HepG2 (cell line): ENCODE measurements at regions of chr14 and their contacts with region 1.

Region 1: DNA sequence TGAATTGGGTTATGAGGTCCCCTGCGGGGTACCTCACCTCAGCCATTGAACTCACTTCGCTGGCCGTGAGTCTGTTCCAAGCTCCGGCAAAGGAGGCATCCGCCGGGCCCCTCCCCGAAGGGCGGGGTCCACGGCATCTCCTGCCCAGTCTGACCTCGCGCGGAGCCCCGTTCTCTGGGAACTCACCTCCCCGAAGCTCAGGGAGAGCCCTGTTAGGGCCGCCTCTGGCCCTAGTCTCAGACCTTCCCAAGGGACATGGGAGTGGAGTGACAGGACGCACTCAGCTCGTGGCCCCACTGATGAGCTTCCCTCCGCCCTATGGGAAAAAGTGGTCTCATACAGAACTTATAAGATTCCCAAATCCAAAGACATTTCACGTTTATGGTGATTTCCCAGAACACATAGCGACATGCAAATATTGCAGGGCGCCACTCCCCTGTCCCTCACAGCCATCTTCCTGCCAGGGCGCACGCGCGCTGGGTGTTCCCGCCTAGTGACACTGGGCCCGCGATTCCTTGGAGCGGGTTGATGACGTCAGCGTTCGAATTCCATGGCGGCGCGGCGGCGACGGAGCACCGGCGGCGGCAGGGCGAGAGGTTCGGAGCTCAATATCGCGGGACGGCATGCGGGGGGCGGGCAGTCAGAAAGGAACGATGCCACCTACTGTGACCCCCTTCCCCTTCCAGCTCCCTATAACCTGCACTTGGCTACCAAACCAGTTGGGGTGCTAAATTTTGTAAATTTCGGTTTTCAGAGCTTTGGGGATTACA is at the start of gene PARP2:
- DNase-seq: peak; percentile 100
- ATAC-seq: peak; percentile 99
- H3K4me3 ChIP-seq: peak within 1 kb of the TSS; percentile 82 to 88 (median 86)
- H3K27ac ChIP-seq: peak within 1 kb of the TSS; percentile 89
- H3K4me1 ChIP-seq: peaks cover 24% of the 10 kb centered on the region
- H3K27me3 ChIP-seq: no peaks in the 10 kb centered on the region; a peak in 1 of 5 replicates
- CTCF ChIP-seq: peak; percentile 25; the same call in 1 of the 2 replicates
- EP300 ChIP-seq: no peak; a peak in 1 of 4 replicates
- POLR2A ChIP-seq: peak; percentile 82 to 99
- RAD21 ChIP-seq: peak; percentile 42; the same call in 1 of the 2 replicates
- total RNA-seq, gene PARP2: 37.3 and 39.1 TPM in 2 replicates

Region 2: GRCh38 chr14:20332788-20333493 is 10.3 kb before region 1 on chr14 and contains the start of gene CCNB1IP1:
- CTCF ChIA-PET with region 1: no interaction called
- POLR2A ChIA-PET with region 1: interaction called, 139 read pairs
- in situ Hi-C with region 1: no loop called
- intact Hi-C with region 1: loop called (anchors 1 kb)
- DNase-seq: peak; percentile 94
- ATAC-seq: peak; percentile 96
- H3K4me3 ChIP-seq: peak within 1 kb of the TSS; percentile 59 to 78 (median 75)
- H3K27ac ChIP-seq: peak within 1 kb of the TSS; percentile 79
- H3K4me1 ChIP-seq: peaks cover 57% of the 10 kb centered on the region
- H3K27me3 ChIP-seq: no peaks in the 10 kb centered on the region; a peak in 1 of 5 replicates
- CTCF ChIP-seq: no peak
- EP300 ChIP-seq: no peak
- POLR2A ChIP-seq: peak; percentile 78 to 94
- RAD21 ChIP-seq: no peak
- total RNA-seq, gene CCNB1IP1: 98.3 and 110 TPM in 2 replicates

Region 3: DNA sequence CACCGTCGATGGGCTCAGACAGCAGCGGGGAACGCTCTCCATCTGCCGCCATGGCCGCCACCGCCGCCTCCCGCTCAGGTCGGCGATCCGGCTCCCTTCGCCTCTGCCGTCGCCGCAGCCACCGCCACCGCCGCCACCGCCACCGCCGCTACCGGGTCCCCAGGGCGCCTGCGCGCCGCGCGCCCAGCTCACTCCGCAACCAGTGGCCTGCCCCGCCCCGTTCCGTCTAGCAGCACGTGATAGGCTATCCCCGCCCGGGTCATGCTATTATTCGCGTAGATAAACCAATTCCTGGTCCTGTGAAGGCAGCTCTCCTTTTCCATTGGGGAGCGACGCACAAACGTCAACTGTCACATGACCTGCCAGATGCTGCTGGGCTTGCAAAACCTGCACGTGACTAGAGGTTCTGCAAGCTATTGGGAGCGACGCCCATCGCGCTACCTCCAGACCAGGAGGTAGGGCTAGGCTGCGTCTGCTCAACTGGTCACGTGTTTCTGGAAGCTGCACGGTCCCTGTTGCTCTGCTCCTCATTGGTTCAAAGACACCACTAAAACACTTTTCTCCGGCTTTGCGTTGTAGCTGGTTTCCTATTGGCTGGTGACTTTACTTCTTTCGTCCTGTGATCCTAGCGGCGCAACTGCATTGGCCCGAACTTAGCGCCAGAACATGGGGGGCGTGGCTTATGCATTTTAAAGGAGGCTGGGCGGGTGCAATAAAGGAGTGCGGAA is 118.2 kb after region 1 on chr14 and contains the start of gene PIP4P1:
- CTCF ChIA-PET with region 1: no interaction called
- POLR2A ChIA-PET with region 1: interaction called, 57 read pairs
- in situ Hi-C with region 1: loop called (anchors 25 kb)
- intact Hi-C with region 1: loop called (anchors 1 kb)
- DNase-seq: peak; percentile 100
- ATAC-seq: peak; percentile 97
- H3K4me3 ChIP-seq: peak within 1 kb of the TSS; percentile 67 to 89 (median 78)
- H3K27ac ChIP-seq: peak within 1 kb of the TSS; percentile 80
- H3K4me1 ChIP-seq: peaks cover 56% of the 10 kb centered on the region
- H3K27me3 ChIP-seq: no peaks in the 10 kb centered on the region; a peak in 1 of 5 replicates
- CTCF ChIP-seq: no peak; the same call in 1 of the 2 replicates
- EP300 ChIP-seq: peak; percentile 25 to 56; a peak in 3 of 4 replicates
- POLR2A ChIP-seq: peak in 1 of 2 experiments; percentile 85; a peak in 3 of 4 replicates
- RAD21 ChIP-seq: peak; percentile 51
- total RNA-seq, gene PIP4P1: 31.9 and 33.4 TPM in 2 replicates

Region 4: DNA sequence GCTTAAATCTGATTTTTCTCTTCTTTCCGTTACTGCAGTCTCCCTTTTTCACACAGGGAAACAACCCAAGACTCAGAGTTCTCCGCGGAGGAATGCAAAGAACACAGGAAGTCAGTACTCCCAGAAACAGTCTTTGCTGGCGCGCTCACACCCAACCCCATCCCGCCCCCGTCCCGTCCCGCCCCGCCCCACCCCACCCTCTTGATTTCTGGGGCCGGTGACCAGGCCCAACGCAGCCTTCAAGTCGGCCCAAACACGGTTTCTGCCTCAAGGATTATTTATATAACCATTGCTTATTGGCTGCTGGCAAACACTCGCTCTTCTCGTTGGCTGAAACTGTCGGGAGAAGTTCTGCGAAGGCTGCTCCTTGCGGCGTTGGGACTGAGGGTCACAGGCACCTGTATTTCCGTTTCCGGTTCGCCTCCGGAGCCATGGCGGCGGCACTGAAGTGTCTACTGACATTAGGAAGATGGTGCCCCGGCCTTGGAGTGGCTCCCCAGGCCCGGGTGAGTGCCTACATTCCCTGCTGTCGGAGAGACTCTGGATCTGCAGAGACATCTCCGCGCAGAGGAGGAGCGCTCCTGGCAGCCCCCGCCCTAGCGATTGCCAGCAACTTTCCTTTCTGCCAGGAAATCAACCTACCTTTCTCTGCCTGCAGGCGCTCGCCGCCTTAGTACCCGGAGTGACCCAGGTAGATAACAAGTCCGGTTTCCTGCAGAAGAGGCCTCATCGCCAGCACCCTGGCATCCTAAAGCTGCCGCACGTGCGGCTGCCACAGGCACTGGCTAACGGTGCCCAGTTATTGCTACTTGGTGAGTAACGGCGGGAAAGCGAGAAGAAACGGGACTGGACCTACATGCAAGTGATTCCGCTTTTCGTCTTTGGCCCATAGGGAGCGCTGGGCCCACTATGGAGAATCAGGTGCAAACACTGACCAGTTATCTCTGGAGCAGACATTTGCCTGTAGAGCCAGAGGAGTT is 646.6 kb after region 1 on chr14 and contains the start of gene METTL17:
- CTCF ChIA-PET with region 1: no interaction called
- POLR2A ChIA-PET with region 1: no interaction called
- in situ Hi-C with region 1: loop called (anchors 25 kb)
- intact Hi-C with region 1: no loop called
- DNase-seq: peak; percentile 98
- ATAC-seq: peak; percentile 98
- H3K4me3 ChIP-seq: peak within 1 kb of the TSS; percentile 72 to 94 (median 85)
- H3K27ac ChIP-seq: peak within 1 kb of the TSS; percentile 76
- H3K4me1 ChIP-seq: peaks cover 26% of the 10 kb centered on the region
- H3K27me3 ChIP-seq: no peaks in the 10 kb centered on the region; a peak in 2 of 5 replicates
- CTCF ChIP-seq: peak; percentile 79
- EP300 ChIP-seq: no peak
- POLR2A ChIP-seq: peak; percentile 81 to 86
- RAD21 ChIP-seq: no peak
- total RNA-seq, gene METTL17: 46.9 and 122 TPM in 2 replicates